Pancreas (tissue), 10 donors: ENCODE measurements at regions of chr15 and their contacts with region 1.

Region 1: GRCh38 chr15:66774001-66774814 is 72.2 kb downstream of the SMAD6 start:
- DNase-seq: peak; percentile 84 to 98 (median 92)
- ATAC-seq: peak; percentile 90 to 93 (median 91)
- H3K4me3 ChIP-seq: no peak overlapping the region
- H3K27ac ChIP-seq: peak overlapping the region; percentile 77 to 87 (median 83)
- H3K4me1 ChIP-seq: peaks cover 37 to 49% (median 38%) of the 10 kb centered on the region in 3 donors
- H3K27me3 ChIP-seq: no peaks in the 10 kb centered on the region
- CTCF ChIP-seq: peak; percentile 91 to 97 (median 94)

Region 2: DNA sequence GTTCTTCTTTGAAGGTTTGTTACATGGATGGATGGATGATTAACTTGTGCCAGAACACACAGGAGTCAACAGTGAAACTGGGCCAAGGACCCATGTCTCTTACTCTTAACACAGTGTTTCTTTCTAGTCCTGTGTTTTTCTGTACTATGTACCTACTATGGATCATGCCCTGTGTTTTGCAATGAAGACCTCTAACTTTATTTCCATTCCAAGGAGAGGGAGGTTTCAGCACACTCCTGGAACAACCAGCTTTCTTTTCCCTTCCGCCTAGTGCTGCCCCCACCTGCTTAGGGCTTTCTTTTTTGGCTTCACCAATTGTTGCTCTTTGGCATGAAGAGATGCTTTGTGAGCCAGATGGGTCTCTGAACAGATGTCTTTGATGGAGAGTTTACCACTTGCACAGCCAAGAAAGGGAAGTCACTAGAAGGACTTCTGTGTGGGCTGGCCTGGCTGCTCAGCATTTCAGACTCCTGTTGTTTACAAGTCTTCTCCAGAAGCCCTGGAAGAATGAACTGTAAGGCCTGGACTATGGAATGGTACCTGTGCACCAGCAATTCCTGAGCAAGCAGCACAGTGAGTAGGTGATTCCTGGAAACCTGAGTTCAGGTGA is 321.1 kb before region 1 on chr15:
- intact Hi-C with region 1: no loop called
- DNase-seq: no peak
- ATAC-seq: peak in 1 of 4 donors; percentile 19
- H3K4me3 ChIP-seq: no peak overlapping the region
- H3K27ac ChIP-seq: no peak overlapping the region
- H3K4me1 ChIP-seq: no peaks in the 10 kb centered on the region
- H3K27me3 ChIP-seq: no peaks in the 10 kb centered on the region
- CTCF ChIP-seq: no peak

Region 3: DNA sequence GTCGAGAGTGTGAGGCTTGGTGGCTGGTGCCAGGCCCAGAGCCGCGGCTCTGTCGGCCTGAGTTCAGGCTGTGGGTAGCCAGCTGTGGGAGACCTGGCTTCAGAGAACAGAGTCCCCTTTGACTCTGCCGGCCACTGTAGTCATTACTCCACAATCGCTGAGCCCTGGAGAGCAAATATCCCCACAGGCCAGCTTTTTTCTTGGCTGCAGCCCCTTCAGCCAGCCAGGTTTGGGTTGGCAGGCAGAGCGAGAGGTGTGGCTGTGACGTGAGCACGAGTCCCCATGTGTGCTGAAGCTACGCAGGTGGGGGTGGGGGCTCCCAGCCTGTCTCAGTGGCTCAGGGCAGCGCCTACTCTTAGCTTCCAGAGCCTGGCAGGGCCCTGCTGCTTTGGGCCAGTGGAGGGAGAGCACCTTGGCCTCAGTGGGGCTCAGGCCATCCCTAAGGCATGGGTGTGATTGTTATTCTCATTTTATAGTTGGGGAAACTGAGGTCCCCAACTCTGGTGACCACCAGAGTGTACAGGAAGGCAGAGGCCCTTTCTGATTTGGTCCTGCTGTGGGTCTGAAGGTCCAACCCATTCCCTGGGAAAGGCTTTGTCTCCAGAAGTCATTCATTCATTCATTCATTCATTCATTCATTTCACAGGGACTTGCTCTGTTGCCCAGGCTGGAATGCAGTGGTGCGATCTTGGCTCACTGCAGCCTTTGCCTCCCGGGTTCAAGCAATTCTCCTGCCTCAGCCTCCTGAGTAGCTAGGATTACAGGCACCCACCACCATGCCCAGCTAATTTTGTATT is 162.8 kb before region 1 on chr15:
- intact Hi-C with region 1: loop called in 1 of 3 experiments (anchors 5 kb)
- DNase-seq: peak; percentile 71 to 91 (median 86)
- ATAC-seq: peak; percentile 93 to 99 (median 97)
- H3K4me3 ChIP-seq: no peak overlapping the region
- H3K27ac ChIP-seq: peak overlapping the region; percentile 48 to 63 (median 56)
- H3K4me1 ChIP-seq: peaks cover 0 to 5% (median 0%) of the 10 kb centered on the region in 3 donors
- H3K27me3 ChIP-seq: no peaks in the 10 kb centered on the region
- CTCF ChIP-seq: no peak

Region 4: DNA sequence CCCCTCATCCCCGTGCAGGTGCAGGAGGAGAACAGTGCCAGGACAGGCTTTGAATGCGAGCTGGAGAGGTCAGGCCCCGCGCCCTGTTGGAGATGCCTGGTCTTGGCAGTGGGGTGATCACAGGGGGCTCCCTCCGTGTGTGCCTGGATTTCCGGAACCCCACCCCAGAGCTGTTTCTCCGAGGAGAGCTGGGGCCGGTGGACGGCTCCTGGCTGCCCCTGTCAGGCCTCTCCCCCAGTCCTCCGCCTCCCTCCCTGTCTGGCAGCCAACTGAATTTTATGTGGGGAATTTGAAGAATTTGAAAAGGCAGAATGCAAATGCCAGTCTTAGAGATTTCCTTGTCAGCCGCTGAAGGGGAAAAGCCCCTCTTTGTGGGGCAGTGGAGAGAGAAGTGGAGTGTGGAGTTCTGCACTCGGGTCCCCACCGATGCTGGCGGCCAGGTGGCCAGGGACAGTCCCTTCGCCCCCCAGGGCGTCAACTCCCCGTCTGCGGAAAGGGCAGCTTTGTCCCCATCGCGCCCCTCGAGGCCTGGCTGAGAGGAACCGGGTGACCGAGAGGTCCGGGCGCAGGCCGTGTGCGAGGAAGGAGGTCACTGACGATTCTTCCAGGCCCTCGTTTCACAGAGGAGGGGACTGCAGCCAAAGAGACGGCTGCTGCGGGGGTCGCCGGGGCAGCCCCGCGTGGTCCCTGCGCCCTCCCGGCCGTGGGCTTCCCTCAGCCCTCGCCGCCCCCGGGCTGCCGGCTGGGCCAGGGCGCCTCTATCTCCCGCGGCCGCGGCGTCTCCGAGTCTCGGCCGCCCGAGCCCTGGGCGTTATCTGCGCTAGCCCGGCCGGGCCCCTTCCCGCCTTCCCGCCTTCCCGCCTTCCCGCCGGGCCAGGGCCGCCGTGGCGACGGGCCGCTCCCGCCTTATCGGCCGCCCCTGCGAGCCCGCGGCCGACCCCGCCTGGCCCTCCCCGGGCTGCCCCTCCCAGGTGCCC is 152.4 kb before region 1 on chr15:
- intact Hi-C with region 1: loop called (anchors 5 to 10 kb)
- DNase-seq: peak in 2 of 6 donors; percentile 9 to 65
- ATAC-seq: peak in 1 of 4 donors; percentile 20
- H3K4me3 ChIP-seq: peak overlapping the region in 1 of 4 donors; percentile 22
- H3K27ac ChIP-seq: no peak overlapping the region
- H3K4me1 ChIP-seq: no peaks in the 10 kb centered on the region
- H3K27me3 ChIP-seq: no peaks in the 10 kb centered on the region
- CTCF ChIP-seq: no peak

Region 5: DNA sequence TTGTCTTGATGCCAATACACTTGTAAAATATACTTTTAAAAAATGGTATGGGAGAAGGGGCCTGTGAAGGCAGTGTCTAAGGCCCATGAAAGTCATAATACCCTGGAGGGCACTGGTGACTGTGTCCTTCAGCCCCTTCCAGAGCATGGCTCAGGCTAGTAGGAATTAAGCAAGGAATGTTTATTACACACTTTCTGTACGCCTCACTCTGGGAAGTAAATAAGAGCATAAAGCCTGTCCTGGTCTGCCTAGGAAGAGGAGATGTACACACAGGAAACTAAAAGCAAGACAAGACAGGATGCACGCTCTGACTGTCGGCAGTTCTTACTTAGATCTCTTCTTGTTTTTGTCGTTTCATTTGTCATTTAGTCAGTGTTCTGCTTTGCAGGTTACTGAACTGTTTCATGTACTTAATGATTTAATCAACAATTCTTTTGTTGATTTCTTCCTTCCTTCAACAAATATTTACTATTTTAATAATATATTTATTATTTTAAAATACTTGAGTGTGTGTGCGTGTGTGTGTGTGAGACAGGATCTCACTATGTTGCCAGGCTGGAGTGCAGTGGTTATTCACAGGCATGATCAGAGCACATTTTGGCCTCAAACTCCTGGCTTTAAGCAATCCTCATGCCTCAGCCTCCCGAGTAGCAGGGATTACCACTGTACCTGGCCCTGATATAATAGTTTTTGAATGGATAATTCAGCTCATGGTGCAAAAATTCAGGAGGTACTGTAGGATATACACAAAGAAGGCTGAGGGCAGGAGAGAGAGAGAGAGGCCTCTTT is 81.2 kb before region 1 on chr15:
- intact Hi-C with region 1: no loop called
- DNase-seq: no peak
- ATAC-seq: no peak
- H3K4me3 ChIP-seq: no peak overlapping the region
- H3K27ac ChIP-seq: no peak overlapping the region
- H3K4me1 ChIP-seq: no peaks in the 10 kb centered on the region
- H3K27me3 ChIP-seq: no peaks in the 10 kb centered on the region
- CTCF ChIP-seq: no peak